Right cardiac atrium (tissue), 5 donors: ENCODE measurements at regions of chr5 and their contacts with region 1.

Region 1: DNA sequence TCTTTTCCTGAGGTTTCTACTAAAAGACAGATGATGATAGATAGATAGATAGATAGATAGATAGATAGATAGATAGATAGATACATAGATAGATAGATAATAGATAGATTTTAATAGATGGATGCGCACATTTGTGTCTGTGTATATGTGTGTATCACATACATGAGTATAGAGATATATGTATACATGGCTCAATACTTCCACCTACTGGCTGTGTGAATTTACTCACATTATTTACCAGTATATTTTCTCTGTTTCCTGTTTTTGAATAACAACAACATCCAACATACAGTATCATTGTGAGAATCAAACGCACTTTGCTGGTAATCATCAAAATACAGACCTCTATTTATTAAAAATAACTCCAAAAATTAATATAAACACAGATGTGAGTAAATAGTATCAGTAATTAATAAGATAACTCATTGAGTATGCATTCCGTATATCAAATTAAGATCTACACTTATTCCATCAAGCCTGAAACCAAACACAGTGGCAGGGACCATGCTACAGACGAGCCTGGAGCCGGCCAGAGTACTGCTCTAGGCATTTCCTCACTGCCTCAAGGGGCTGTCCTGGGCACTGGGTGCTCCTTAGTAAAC is 338.0 kb downstream of the SEMA5A start:
- DNase-seq: no peak
- ATAC-seq: peak in 1 of 2 donors; percentile 31
- H3K4me3 ChIP-seq: no peak overlapping the region
- H3K27ac ChIP-seq: no peak overlapping the region
- H3K4me1 ChIP-seq: no peaks in the 10 kb centered on the region
- H3K27me3 ChIP-seq: no peaks in the 10 kb centered on the region

Region 2: GRCh38 chr5:7927466-7928375 is 1280.2 kb before region 1 on chr5:
- intact Hi-C with region 1: loop called in 1 of 4 experiments (anchors 10 kb)
- DNase-seq: peak; percentile 33 to 65 (median 58)
- ATAC-seq: peak; percentile 71 to 83
- H3K4me3 ChIP-seq: no peak overlapping the region
- H3K27ac ChIP-seq: no peak overlapping the region
- H3K4me1 ChIP-seq: no peaks in the 10 kb centered on the region
- H3K27me3 ChIP-seq: no peaks in the 10 kb centered on the region

Region 3: DNA sequence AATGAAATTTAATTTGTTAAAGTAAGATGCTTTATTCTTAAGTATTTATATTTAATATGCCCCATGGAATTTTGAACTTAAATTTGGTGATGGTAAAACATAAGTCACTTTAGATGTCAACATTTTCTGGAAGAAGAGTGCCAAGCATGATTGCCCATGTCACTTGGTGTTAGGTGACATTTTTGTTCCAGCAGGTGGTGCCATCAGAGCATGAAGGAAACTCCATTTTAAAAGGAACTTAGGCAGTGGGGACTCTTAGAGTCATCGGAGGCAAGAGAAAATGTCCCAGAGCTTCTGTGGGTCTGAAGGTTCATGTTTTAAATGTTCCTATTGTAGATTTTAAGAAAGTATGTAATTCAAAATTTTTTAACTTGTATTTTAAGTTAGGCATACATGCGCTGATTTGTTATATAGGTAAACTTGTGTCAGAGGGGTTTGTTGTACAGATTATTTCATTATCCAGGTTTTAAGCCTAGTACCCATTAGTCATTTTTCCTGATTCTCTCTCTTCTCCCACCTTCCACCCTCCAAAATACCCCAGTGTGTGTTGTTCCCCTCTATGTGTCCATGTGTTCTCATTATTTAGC is 451.3 kb before region 1 on chr5:
- intact Hi-C with region 1: loop called in 2 of 4 experiments (anchors 10 kb)
- DNase-seq: no peak
- ATAC-seq: no peak
- H3K4me3 ChIP-seq: no peak overlapping the region
- H3K27ac ChIP-seq: no peak overlapping the region
- H3K4me1 ChIP-seq: no peaks in the 10 kb centered on the region
- H3K27me3 ChIP-seq: no peaks in the 10 kb centered on the region

Region 4: GRCh38 chr5:9573796-9574195 is 365.9 kb after region 1 on chr5:
- intact Hi-C with region 1: no loop called
- DNase-seq: peak in 1 of 3 donors; percentile 20
- ATAC-seq: no peak
- H3K4me3 ChIP-seq: no peak overlapping the region
- H3K27ac ChIP-seq: no peak overlapping the region
- H3K4me1 ChIP-seq: no peaks in the 10 kb centered on the region
- H3K27me3 ChIP-seq: no peaks in the 10 kb centered on the region

Region 5: GRCh38 chr5:9686211-9686610 is 478.3 kb after region 1 on chr5:
- intact Hi-C with region 1: no loop called
- DNase-seq: no peak
- ATAC-seq: no peak
- H3K4me3 ChIP-seq: no peak overlapping the region
- H3K27ac ChIP-seq: no peak overlapping the region
- H3K4me1 ChIP-seq: no peaks in the 10 kb centered on the region
- H3K27me3 ChIP-seq: no peaks in the 10 kb centered on the region